Transverse colon (tissue), 4 donors: ENCODE measurements at regions of chr2 and their contacts with region 1.

Region 1: DNA sequence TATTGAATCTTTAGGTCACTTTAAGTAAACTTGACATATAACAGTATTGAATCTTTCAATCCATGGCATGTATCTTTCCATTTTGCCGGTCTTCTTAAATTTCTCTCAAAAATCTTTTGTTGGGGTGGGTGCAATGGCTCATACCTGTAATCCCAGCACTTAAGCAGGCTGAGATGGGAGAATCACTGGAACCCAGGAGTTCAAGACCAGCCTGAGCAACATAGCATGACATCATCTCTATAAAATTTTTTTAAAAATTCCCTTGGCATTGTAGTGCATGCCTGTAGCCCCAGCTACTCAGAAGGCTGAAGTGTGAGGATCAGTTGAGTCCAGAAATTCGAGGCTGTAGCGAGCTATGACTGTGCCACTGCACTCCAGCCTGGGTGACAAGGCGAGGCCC is 65.3 kb upstream of the LGALSL start:
- DNase-seq: no peak
- H3K4me3 ChIP-seq: no peak overlapping the region
- H3K27ac ChIP-seq: no peak overlapping the region
- H3K4me1 ChIP-seq: no peaks in the 10 kb centered on the region
- H3K27me3 ChIP-seq: no peaks in the 10 kb centered on the region
- CTCF ChIP-seq: no peak
- EP300 ChIP-seq: no peak
- POLR2A ChIP-seq: no peak

Region 2: DNA sequence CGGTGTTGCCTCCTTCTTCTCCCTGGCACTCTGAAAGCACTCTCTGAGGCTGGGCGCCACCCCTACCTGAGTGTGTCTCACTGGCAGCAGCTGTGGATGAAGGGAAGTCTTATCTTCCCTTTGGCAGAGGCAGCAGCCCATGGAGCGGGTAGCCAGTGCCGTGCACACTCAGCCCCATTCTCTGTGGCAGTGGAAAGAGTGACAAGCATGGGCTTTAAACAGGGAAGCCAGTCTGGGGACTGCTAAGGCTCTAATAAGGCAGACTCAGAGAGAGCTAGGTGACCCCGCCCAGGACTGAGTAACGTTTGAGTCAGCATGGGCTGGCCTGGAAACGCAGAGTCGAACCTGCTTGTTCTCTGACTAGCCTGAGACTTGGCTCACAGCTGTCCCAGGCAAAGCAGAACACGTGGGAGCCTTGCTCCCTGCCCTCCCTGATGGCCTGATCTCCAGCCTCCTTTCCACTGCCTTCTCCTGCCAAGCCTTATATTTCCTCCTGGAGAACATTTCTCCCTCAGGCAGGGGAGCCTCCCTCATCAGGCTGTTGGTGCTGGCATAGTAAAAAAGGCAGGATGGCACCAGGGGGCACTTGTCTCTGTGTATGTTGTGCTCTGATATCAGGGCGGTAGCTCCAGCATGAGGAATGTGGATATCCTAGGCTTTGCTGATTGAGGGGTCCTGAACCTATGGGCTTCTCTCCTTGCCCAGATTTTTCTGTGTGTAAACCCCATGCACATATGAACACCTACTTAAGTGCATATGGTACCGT is 28.6 kb before region 1 on chr2:
- in situ Hi-C with region 1: no loop called
- intact Hi-C with region 1: loop called (anchors 1 kb)
- DNase-seq: peak; percentile 84
- H3K4me3 ChIP-seq: no peak overlapping the region
- H3K27ac ChIP-seq: peak overlapping the region; percentile 47 to 68 (median 52)
- H3K4me1 ChIP-seq: peaks cover 6 to 12% (median 11%) of the 10 kb centered on the region in 4 donors
- H3K27me3 ChIP-seq: no peaks in the 10 kb centered on the region
- CTCF ChIP-seq: peak in 1 of 5 experiments; percentile 27
- EP300 ChIP-seq: no peak
- POLR2A ChIP-seq: peak; percentile 52